MCF 10A (cell line): ENCODE measurements at regions of chr2 and their contacts with region 1.

Region 1: GRCh38 chr2:152755029-152755428 is 36.6 kb downstream of the ARL6IP6 start:
- DNase-seq: no peak
- H3K4me3 Mint-ChIP-seq: no peak overlapping the region
- H3K27ac Mint-ChIP-seq: no peak overlapping the region
- H3K4me1 Mint-ChIP-seq: no peaks in the 10 kb centered on the region
- H3K27me3 Mint-ChIP-seq: no peaks in the 10 kb centered on the region
- CTCF ChIP-seq: peak; percentile 21

Region 2: DNA sequence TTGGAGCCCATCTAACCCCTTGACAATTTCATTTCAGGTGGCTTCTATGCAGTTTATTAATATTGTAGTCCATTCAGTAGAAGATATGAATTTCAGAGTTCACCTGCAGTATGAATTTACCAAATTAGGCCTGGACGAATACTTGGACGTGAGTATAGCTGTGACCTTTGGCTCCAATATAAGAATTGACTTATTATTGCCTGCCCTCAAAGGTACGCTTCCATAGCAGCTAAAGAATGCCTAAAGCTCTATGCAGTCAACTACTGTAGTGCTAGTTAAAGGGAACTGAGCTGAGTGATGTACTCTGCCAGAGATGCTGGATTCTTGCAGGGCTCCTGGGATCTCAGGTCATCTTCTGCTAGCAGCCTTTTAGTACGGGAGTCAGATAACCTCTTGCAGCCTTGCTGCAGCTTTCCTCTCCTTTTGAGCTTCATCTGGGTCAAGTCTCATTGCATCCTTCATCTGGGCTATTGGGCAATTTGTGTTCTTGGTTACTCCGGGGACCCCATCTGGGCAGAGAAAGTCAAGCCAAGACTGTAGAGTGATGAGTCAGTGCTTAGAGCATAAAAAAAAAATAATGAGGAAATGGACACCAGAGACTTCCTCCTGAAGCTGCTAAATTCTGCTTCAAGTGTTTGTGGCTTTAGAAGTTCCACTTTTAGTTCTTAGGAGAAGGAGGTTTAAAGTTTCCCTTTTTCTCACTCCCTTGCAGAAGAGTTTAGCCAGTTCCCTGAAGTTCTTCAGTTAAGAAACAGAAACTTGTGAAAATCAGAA is 143.4 kb before region 1 on chr2:
- CTCF ChIA-PET with region 1: no interaction called
- POLR2A ChIA-PET with region 1: no interaction called
- intact Hi-C with region 1: no loop called
- DNase-seq: peak; percentile 81
- H3K4me3 Mint-ChIP-seq: no peak overlapping the region
- H3K27ac Mint-ChIP-seq: peak overlapping the region; percentile 20
- H3K4me1 Mint-ChIP-seq: peaks cover 6% of the 10 kb centered on the region
- H3K27me3 Mint-ChIP-seq: no peaks in the 10 kb centered on the region
- CTCF ChIP-seq: no peak

Region 3: GRCh38 chr2:153005071-153005730 is 250.2 kb after region 1 on chr2:
- CTCF ChIA-PET with region 1: no interaction called
- POLR2A ChIA-PET with region 1: no interaction called
- intact Hi-C with region 1: no loop called
- DNase-seq: no peak
- H3K4me3 Mint-ChIP-seq: no peak overlapping the region
- H3K27ac Mint-ChIP-seq: no peak overlapping the region
- H3K4me1 Mint-ChIP-seq: no peaks in the 10 kb centered on the region
- H3K27me3 Mint-ChIP-seq: no peaks in the 10 kb centered on the region
- CTCF ChIP-seq: no peak

Region 4: GRCh38 chr2:153169609-153170008 is 414.6 kb after region 1 on chr2:
- CTCF ChIA-PET with region 1: no interaction called
- POLR2A ChIA-PET with region 1: no interaction called
- intact Hi-C with region 1: loop called (anchors 5 kb)
- DNase-seq: no peak
- H3K4me3 Mint-ChIP-seq: no peak overlapping the region
- H3K27ac Mint-ChIP-seq: no peak overlapping the region
- H3K4me1 Mint-ChIP-seq: peaks cover 10% of the 10 kb centered on the region
- H3K27me3 Mint-ChIP-seq: peaks cover 4% of the 10 kb centered on the region
- CTCF ChIP-seq: no peak